Sigmoid colon (tissue), 7 donors: ENCODE measurements at regions of chr15 and their contacts with region 1.

Region 1: GRCh38 chr15:52019388-52020220 is 585 bp downstream of the MAPK6 start:
- DNase-seq: peak; percentile 95
- H3K4me3 ChIP-seq: peak overlapping the region; percentile 59 to 75 (median 70)
- H3K27ac ChIP-seq: peak overlapping the region; percentile 95 to 98 (median 96)
- H3K4me1 ChIP-seq: peaks cover 0 to 37% (median 32%) of the 10 kb centered on the region in 4 donors
- H3K27me3 ChIP-seq: no peaks in the 10 kb centered on the region
- CTCF ChIP-seq: no peak
- EP300 ChIP-seq: peak in 2 of 4 donors; percentile 13 to 66
- POLR2A ChIP-seq: peak; percentile 57 to 63

Region 2: DNA sequence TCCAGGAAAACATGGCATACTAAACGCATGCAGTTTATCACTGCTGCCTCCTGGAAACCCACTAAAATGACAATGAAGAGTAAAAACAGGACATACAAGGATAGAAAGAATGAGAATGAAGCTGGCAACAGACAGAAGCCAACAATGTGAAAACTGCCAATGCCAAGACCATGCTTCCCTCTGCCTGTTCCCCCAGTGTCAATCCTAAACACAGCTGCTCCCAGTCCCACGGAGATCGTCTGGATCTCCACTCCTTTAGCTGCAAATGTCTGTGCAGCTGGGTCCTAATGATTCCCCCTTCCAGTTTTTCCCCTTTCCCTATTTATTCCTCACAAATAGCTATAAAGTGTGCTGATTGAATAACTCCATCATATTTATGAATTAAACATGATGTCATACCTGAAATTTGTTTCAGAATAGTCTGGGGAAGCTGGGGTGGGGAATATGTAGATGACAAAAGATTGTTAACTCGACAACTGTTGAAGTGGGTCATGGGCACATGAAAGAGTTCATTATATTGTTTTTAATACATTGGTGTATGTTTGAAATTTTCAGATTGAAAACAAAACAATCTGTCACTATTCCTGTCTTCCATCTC is 64.0 kb before region 1 on chr15:
- intact Hi-C with region 1: no loop called
- DNase-seq: no peak
- H3K4me3 ChIP-seq: no peak overlapping the region
- H3K27ac ChIP-seq: no peak overlapping the region
- H3K4me1 ChIP-seq: no peaks in the 10 kb centered on the region
- H3K27me3 ChIP-seq: no peaks in the 10 kb centered on the region
- CTCF ChIP-seq: no peak
- EP300 ChIP-seq: no peak
- POLR2A ChIP-seq: no peak

Region 3: DNA sequence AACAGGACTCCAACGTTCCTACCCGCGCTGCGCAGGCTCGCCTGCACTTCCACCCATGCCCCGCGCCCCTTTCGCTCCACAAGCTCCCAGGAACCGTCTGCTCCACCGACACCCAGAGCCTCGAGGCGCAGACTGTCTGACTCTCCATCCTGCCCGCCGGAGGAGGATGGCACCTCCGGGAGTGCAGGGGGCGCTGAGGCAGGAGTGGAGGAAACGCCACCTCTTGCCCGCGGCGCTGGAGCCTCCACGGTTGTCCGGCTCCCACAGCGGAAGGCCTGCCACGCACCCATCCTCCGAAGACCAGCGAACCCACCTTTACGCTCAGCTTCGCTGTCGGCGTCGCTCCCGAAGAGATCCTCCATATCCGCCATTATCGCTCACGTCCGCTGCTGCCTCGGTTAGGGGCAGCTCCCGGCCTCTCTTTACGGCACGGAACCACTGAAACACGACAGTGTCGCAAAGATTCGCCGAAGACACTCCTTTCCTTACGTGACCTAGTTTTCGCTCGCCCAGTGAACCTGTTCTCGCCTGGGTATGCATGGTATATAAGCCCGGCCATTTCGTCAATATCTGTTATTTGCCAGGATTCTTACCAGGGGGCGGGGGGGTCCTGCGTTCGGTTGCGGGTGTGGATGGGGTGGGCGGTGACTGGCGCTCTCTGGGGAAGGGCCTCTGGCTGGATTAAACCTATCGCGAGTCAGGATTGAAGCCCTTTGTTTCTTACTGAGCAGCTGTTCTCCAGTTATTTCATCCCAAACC is 48.0 kb before region 1 on chr15 and contains the start of gene LEO1:
- intact Hi-C with region 1: loop called (anchors 1 kb)
- DNase-seq: peak; percentile 96
- H3K4me3 ChIP-seq: peak within 1 kb of the TSS; percentile 60 to 75 (median 74)
- H3K27ac ChIP-seq: peak within 1 kb of the TSS; percentile 86 to 90 (median 88)
- H3K4me1 ChIP-seq: peaks cover 0 to 18% (median 11%) of the 10 kb centered on the region in 4 donors
- H3K27me3 ChIP-seq: no peaks in the 10 kb centered on the region
- CTCF ChIP-seq: peak; percentile 35 to 44 (median 36)
- EP300 ChIP-seq: no peak
- POLR2A ChIP-seq: peak; percentile 43 to 49
- total RNA-seq, gene LEO1: 7.4 to 15.3 (median 13.0) TPM

Region 4: GRCh38 chr15:52031566-52031965 is 12.0 kb after region 1 on chr15:
- intact Hi-C with region 1: no loop called
- DNase-seq: no peak
- H3K4me3 ChIP-seq: no peak overlapping the region
- H3K27ac ChIP-seq: no peak overlapping the region
- H3K4me1 ChIP-seq: peaks cover 0 to 19% (median 5%) of the 10 kb centered on the region in 4 donors
- H3K27me3 ChIP-seq: no peaks in the 10 kb centered on the region
- CTCF ChIP-seq: no peak
- EP300 ChIP-seq: no peak
- POLR2A ChIP-seq: no peak